ENCODE measurements at regions of chr2 and their contacts with region 1.

Region 1: GRCh38 chr2:74472086-74472944 is at the start of gene MRPL53:
- DNase-seq: peak; percentile 47
- H3K4me3 ChIP-seq: peak within 1 kb of the TSS; percentile 88
- CTCF ChIP-seq: no peak

Region 2: GRCh38 chr2:74418312-74418711 is 54.0 kb before region 1 on chr2:
- CTCF ChIA-PET with region 1: no interaction called
- POLR2A ChIA-PET with region 1: no interaction called
- DNase-seq: no peak
- H3K4me3 ChIP-seq: no peak overlapping the region
- CTCF ChIP-seq: no peak

Region 3: GRCh38 chr2:74458132-74458925 is 14.0 kb before region 1 on chr2 and contains the start of gene WBP1:
- CTCF ChIA-PET with region 1: no interaction called
- POLR2A ChIA-PET with region 1: interaction called, 12 read pairs
- DNase-seq: peak; percentile 100
- H3K4me3 ChIP-seq: peak within 1 kb of the TSS; percentile 74
- CTCF ChIP-seq: no peak

Region 4: GRCh38 chr2:74566754-74567085 is 94.4 kb after region 1 on chr2:
- CTCF ChIA-PET with region 1: no interaction called
- POLR2A ChIA-PET with region 1: no interaction called
- DNase-seq: peak; percentile 97
- H3K4me3 ChIP-seq: no peak overlapping the region
- CTCF ChIP-seq: no peak